Cardiac septum (tissue), 1 donor: ENCODE measurements at regions of chr6 and their contacts with region 1.

Region 1: GRCh38 chr6:7541175-7542064 is at the start of gene DSP:
- DNase-seq: peak; percentile 84
- total RNA-seq, gene DSP: 241 TPM

Region 2: DNA sequence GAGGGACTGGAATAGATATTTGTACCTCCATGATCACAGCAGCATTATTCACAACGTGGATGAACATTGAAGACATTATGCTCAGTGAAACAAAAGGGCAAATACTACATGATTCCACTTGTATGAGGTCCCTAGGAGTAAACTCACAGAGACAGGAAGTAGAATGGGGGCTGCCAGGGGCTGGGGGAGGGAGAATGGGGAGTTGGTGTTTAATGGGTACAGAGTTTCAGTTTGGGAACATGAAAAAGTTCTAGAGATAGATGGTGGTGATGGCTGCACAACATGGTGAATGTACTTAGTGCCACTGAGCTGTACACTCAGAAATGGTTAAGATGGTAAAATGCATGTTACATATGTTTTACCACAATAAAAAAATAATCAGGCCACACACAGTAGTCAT is 598.0 kb before region 1 on chr6:
- intact Hi-C with region 1: no loop called
- DNase-seq: no peak

Region 3: GRCh38 chr6:7373739-7374138 is 167.7 kb before region 1 on chr6:
- intact Hi-C with region 1: no loop called
- DNase-seq: no peak

Region 4: DNA sequence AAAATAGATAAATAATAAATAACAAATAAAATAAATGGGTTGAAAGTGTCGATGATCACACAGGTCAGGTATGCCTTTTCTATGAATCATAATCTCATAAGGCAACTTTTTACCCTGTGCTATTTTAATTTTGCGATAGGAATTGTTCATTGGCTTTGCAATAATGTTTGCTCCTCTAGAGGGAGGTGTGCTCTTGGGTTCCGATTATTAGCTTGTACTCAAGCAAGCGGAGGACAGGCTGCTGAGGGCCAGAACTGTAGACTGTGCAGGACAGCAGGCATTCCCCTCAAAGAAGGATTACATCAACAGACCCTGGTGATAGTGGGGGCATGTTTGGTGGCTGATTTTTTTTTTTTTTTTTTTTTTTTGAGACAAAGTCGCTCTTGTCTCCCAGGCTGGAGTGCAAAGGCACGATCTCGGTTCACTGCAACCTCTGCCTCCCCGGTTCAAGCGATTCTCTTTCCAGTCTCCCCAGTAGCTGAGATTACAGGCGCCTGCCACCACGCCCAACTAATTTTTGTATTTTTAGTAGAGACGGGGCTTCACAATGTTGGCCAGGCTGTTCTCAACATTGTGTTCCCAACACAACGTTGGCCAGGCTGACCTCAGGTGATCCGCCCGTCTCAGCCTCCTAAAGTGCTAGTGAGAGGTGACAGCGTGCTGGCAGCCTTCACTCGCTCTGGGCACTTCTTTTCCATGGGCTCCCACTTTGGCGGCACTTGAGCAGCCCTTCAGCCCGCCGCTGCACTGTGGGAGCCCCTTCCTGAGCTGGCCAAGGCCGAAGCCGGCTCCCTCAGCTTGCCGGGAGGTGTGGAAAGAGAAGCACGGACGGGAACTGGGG is 116.2 kb before region 1 on chr6:
- intact Hi-C with region 1: loop called (anchors 10 kb)
- DNase-seq: no peak

Region 5: DNA sequence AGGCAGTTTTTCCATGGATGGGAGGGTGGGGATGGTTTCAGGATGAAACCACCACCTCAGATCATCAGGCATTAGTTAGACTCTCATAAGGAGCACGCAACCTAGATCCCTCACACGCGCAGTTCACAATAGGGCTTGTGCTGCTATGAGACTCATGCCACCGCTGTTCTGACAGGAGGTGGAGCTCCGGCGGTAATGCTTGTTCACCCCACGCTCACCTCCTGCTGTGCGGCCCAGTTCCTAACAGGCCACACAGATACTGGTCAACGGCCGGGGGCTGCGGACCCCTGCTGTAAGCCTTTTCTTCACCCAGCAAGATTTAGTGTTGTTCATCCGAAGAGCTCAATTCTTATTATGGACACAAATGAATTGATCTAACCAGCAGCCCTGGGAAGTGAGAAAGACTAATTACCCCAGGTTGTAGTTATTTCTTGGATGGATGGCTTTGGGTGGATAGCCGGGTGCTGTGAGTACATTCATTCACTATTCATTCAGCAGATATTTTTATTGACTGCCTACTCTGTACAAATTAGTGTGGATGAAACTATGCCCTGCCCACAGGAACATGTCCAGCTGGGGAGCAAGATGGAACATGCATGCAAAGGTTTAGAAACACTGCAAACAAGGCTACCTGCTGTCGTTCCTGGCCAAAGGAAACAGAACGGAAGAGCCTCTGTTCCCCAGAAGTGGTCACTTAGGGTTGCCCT is 94.6 kb before region 1 on chr6:
- intact Hi-C with region 1: no loop called
- DNase-seq: no peak

Region 6: DNA sequence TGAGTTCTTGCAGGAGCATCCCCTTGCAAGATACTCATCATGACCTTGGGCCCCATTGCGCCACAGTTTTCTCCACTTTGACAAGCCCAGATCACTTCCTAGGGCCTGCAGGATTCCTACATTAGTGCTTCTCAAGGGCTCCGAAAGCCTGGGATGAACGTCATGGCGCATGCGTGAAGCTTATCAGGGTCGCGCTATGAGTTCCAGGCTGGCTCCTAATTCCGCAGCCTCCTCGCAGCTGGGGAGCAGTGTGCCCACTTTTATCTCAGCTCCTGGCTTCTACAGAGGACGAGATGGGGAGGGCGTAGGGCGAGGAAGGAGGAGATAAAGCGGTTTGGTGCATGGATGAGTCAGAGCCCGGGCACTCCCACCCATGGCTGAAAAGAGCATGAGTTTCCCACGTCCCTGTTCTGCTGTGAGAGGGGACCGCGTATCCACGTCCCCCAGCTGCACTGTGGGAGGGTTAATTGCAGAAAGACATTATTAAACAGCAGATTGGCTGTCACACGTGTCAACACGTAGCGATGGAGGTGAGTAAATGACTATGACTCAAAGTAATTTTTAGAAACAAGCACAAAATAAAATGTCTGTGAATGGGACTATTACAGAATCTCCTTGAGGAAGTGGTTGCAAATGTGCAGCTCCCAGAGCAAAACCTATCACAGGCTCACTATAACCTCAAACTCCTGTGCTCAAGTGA is 72.9 kb before region 1 on chr6:
- intact Hi-C with region 1: loop called (anchors 5 kb)
- DNase-seq: peak; percentile 83

Region 7: GRCh38 chr6:7589949-7590917 is 48.8 kb after region 1 on chr6 and contains the start of gene SNRNP48:
- intact Hi-C with region 1: loop called (anchors 2 kb)
- DNase-seq: peak; percentile 97
- total RNA-seq, gene SNRNP48: 13.4 TPM